CD8-positive, alpha-beta memory T cell (primary cell): ENCODE measurements at regions of chr10 and their contacts with region 1.

Region 1: GRCh38 chr10:43292755-43293676 is 26.2 kb upstream of the RASGEF1A start:
- DNase-seq: peak in 4 of 5 donors; percentile 17 to 62 (median 36)
- H3K4me3 ChIP-seq: peak overlapping the region; percentile 8
- H3K4me3 Mint-ChIP-seq: peak overlapping the region; percentile 37 to 74 (median 69)
- H3K27ac ChIP-seq: no peak overlapping the region
- H3K27ac Mint-ChIP-seq: peak overlapping the region; percentile 80 to 93 (median 90)
- H3K4me1 ChIP-seq: peaks cover 43% of the 10 kb centered on the region
- H3K4me1 Mint-ChIP-seq: peaks cover 60 to 82% (median 80%) of the 10 kb centered on the region in 3 donors
- H3K27me3 ChIP-seq: no peaks in the 10 kb centered on the region
- H3K27me3 Mint-ChIP-seq: no peaks in the 10 kb centered on the region

Region 2: GRCh38 chr10:43265799-43266721 is 27.0 kb before region 1 on chr10:
- CTCF ChIA-PET with region 1: interaction called, 70 read pairs
- POLR2A ChIA-PET with region 1: no interaction called
- DNase-seq: peak in 3 of 5 donors; percentile 35 to 76 (median 44)
- H3K4me3 ChIP-seq: peak overlapping the region; percentile 51
- H3K4me3 Mint-ChIP-seq: peak overlapping the region; percentile 85 to 91 (median 88)
- H3K27ac ChIP-seq: no peak overlapping the region
- H3K27ac Mint-ChIP-seq: peak overlapping the region in 4 of 8 donors; percentile 14 to 80 (median 76)
- H3K4me1 ChIP-seq: peaks cover 7% of the 10 kb centered on the region
- H3K4me1 Mint-ChIP-seq: peaks cover 4 to 29% (median 8%) of the 10 kb centered on the region in 3 donors
- H3K27me3 ChIP-seq: peaks cover 21% of the 10 kb centered on the region
- H3K27me3 Mint-ChIP-seq: peaks cover 27 to 41% of the 10 kb centered on the region in 2 donors

Region 3: DNA sequence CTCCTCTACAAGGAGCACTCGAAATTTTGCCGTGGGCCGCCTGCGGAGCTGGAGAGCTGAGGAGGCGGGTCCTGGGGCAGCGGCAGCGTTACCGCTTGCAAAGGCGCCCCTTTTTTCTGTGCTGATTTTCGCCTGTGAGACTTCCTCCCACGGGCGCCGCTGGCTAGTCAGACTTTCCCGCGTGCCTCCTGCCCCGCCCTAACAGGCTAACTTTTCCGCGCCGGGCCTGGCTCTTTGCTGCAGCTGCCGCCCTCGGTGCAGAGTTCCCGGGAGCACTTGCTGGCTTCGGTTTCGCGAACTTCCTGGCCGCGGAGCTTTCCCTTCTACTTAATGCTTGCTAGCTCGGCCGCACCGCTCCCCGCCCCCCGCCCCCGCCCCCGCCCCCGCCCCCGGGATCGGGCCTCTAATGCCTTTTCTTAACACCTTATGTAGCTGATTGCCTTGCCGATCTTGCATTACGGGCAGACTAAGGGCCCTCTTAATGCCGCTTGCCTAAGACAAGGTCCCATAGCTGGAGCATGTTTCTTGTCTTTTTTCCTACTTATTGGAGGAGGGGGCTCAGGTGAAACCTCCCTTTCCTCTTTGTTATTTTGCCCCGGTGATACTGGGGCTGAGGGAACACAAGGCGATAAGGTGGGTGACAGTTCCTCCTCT is 11.8 kb after region 1 on chr10:
- CTCF ChIA-PET with region 1: interaction called, 22 read pairs
- POLR2A ChIA-PET with region 1: no interaction called
- DNase-seq: peak; percentile 38 to 66 (median 41)
- H3K4me3 ChIP-seq: peak overlapping the region; percentile 24
- H3K4me3 Mint-ChIP-seq: peak overlapping the region; percentile 66 to 89 (median 84)
- H3K27ac ChIP-seq: no peak overlapping the region
- H3K27ac Mint-ChIP-seq: peak overlapping the region; percentile 40 to 84 (median 77)
- H3K4me1 ChIP-seq: peaks cover 28% of the 10 kb centered on the region
- H3K4me1 Mint-ChIP-seq: peaks cover 47 to 59% (median 51%) of the 10 kb centered on the region in 3 donors
- H3K27me3 ChIP-seq: no peaks in the 10 kb centered on the region
- H3K27me3 Mint-ChIP-seq: no peaks in the 10 kb centered on the region